AG04449 (cell line): ENCODE measurements at regions of chr12 and their contacts with region 1.

Region 1: DNA sequence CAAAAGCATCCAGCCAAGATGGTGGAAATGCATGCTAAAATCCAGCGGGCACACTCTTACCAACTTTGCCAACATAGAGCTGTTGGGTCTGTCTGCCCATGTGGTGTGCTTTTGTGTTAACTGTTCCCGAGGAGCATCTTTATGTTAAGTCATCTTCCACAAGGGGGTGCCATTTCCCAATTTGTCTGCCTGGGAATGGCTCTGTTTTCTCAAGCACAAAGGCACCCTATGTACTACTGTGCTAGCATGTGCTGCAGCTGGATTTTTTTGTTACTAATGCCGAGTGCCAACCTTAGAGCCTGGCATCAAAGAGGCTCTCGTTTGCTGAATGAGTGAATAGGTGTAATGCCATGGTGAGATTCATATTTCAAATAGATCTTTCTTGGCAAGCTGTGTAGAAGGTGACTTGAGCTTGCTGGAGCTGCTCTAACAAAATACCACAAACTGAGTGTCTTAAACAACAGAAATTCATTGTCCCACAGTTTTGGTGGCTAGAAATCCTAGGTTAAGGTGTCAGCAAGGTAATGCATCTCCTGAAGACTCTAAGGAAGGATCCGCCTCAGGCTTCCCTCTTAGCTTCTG is 74.3 kb downstream of the TRHDE start:
- DNase-seq: peak; percentile 36
- H3K4me3 ChIP-seq: no peak overlapping the region
- CTCF ChIP-seq: peak; percentile 56

Region 2: GRCh38 chr12:72282721-72283120 is 63.7 kb before region 1 on chr12:
- CTCF ChIA-PET with region 1: no interaction called
- POLR2A ChIA-PET with region 1: no interaction called
- DNase-seq: no peak
- H3K4me3 ChIP-seq: no peak overlapping the region
- CTCF ChIP-seq: peak; percentile 59

Region 3: GRCh38 chr12:72313806-72314205 is 32.6 kb before region 1 on chr12:
- CTCF ChIA-PET with region 1: interaction called, 10 read pairs
- POLR2A ChIA-PET with region 1: no interaction called
- DNase-seq: no peak
- H3K4me3 ChIP-seq: no peak overlapping the region
- CTCF ChIP-seq: no peak

Region 4: DNA sequence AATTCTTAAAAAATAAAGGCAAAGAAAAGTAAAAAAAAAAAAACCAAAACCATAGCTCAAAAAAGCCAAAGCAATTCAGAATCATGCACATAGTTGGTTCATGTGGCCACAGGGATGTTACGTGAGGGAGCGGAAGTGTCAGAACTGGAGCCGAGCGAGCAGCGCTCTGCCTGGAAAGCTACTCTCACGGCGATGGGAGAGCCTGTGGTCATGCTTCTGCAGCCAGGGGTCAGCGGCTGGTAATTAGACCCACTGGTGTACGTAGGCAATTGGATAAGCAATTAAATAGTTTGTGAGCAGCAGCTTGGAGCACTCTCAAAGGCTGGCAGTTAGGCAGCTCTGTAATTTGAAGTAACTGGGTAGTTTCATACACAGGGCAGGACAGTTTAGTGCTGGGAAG is 16.2 kb before region 1 on chr12:
- CTCF ChIA-PET with region 1: interaction called, 10 read pairs
- POLR2A ChIA-PET with region 1: no interaction called
- DNase-seq: no peak
- H3K4me3 ChIP-seq: no peak overlapping the region
- CTCF ChIP-seq: no peak

Region 5: DNA sequence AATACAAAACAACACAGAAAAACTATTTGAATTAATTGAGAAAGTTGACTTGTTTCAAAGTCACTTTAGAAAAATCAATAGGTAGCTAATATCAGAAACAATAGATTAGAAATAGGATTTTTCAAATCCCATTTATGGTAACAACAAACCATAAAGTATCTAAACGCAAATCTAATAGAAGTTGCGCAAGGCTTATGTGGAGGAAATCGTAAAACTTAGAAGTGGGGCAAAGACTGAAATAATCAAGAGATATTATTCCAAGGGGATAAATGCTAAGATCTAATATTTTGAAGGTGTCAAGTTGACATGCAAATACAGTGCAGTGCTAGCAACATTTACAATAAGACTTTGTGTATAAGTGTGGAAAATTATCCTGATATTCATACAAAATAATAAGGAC is 13.0 kb after region 1 on chr12:
- CTCF ChIA-PET with region 1: interaction called, 10 read pairs
- POLR2A ChIA-PET with region 1: no interaction called
- DNase-seq: no peak
- H3K4me3 ChIP-seq: no peak overlapping the region
- CTCF ChIP-seq: no peak

Region 6: GRCh38 chr12:72365151-72365550 is 18.7 kb after region 1 on chr12:
- CTCF ChIA-PET with region 1: interaction called, 11 read pairs
- POLR2A ChIA-PET with region 1: no interaction called
- DNase-seq: no peak
- H3K4me3 ChIP-seq: no peak overlapping the region
- CTCF ChIP-seq: no peak

Region 7: DNA sequence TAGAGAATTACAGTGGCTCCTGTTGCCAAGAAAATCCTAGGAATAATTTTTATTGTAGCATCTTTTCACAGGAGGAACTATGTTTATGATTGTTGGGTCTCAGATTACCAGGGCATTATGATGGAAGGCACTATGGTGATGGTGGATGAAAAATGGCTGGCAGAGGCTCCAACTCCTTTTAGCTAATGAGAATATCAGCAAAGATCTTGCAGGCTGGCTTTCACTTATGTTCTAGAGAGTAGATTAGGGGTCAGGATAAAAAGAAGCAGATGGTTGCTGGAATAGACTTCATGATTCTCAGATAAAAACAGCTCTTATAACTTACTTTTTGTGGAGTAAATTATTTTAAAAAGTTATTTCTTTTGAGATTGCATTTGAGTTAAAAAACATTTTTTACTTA is 427.6 kb after region 1 on chr12:
- CTCF ChIA-PET with region 1: interaction called, 11 read pairs
- POLR2A ChIA-PET with region 1: no interaction called
- DNase-seq: no peak
- H3K4me3 ChIP-seq: no peak overlapping the region
- CTCF ChIP-seq: no peak